ENCODE measurements at regions of chr19 and their contacts with region 1.

Region 1: DNA sequence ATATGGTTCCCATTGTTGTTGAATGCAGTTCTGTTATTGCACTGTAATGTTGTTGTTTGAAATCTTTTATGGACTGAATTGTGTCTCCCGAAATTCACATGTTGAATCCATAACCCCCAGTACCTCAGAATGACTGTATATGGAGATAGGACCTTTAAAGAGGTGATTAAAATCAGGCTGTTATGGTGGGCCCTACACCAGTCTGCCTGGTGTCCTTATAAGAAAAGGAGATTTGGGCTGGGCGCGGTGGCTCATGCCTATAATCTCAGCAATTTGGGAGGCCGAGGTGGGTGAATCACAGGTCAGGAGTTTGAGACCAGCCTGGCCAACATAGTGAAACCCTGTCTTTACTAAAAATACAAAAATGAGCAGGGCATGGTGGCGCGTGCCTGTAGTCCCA is 7.4 kb downstream of the CXCL17 start:
- DNase-seq: no peak

Region 2: DNA sequence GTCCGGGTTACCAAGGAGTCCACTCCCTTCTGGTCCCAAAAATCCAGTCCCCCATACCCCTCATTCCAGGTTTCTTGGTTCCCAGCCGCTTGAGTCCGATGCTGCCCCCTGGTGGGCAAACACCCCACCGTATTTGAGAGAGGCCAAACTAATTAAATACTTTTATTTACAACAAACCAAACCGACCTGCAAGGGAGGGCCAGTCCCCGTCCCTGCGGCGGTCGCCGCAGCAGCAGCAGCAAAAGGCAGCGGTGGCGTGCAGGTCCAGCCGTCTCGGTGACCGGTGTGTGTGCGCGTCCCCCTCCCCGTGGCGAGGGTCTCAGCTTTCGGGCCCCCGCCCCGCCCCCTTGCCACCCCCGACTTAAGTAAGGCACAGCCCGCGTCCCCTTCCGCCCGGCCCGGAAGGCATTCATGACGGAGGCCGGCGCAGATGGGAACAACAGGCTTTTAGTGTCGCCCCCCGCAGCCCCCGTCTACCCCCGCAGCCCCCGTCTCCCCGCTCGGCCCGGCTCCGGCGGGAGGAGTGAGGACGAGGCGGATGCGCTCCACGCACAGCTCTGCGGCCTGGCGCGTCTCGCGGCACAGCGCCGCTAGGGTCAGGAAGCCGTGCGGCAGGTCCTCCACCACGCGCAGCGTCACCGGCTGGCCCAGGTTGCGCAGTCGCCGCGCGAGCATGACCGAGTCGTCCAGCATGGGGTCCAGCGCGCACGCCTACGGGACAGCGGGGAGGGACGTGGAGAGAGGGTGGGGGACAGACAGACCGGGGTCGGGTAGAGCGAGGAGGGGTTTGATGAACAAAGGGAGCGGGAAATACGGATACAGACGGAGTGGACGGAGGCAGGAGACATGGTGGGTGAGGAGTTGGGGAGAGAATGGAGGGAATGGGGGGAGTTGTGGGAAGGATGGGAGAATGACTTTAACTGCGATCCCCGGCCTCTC is 33.7 kb before region 1 on chr19:
- intact Hi-C with region 1: loop called (anchors 1 kb)
- DNase-seq: peak; percentile 87

Measured in cardiac septum (tissue), 1 donor.